ENCODE measurements at regions of chr1 and their contacts with region 1.

Region 1: GRCh38 chr1:67791686-67792475 is 41.4 kb downstream of the GNG12 start:
- DNase-seq: no peak
- ATAC-seq: no peak
- H3K4me3 ChIP-seq: no peak overlapping the region
- H3K27ac ChIP-seq: no peak overlapping the region
- H3K4me1 ChIP-seq: no peaks in the 10 kb centered on the region
- H3K27me3 ChIP-seq: no peaks in the 10 kb centered on the region; a peak in 2 of 4 replicates
- CTCF ChIP-seq: no peak
- EP300 ChIP-seq: no peak
- POLR2A ChIP-seq: no peak
- RAD21 ChIP-seq: no peak

Region 2: GRCh38 chr1:67489643-67490042 is 302.2 kb before region 1 on chr1:
- CTCF ChIA-PET with region 1: no interaction called
- POLR2A ChIA-PET with region 1: no interaction called
- RAD21 ChIA-PET with region 1: no interaction called
- SMC1A ChIA-PET with region 1: no interaction called
- in situ Hi-C with region 1: no loop called
- intact Hi-C with region 1: no loop called
- DNase-seq: peak; percentile 0
- ATAC-seq: peak; percentile 81
- H3K4me3 ChIP-seq: no peak overlapping the region
- H3K27ac ChIP-seq: no peak overlapping the region
- H3K4me1 ChIP-seq: no peaks in the 10 kb centered on the region
- H3K27me3 ChIP-seq: no peaks in the 10 kb centered on the region
- CTCF ChIP-seq: peak; percentile 36 to 51 (median 36); a peak in 4 of 6 replicates
- EP300 ChIP-seq: no peak
- POLR2A ChIP-seq: no peak
- RAD21 ChIP-seq: peak; percentile 58

Region 3: GRCh38 chr1:67803380-67804279 is 11.7 kb after region 1 on chr1:
- CTCF ChIA-PET with region 1: interaction called, 24 read pairs
- POLR2A ChIA-PET with region 1: interaction called, 16 read pairs
- RAD21 ChIA-PET with region 1: interaction called, 32 read pairs
- SMC1A ChIA-PET with region 1: interaction called, 389 read pairs
- in situ Hi-C with region 1: no loop called
- intact Hi-C with region 1: no loop called
- DNase-seq: no peak
- ATAC-seq: peak; percentile 19; the same call in 2 of the 3 replicates
- H3K4me3 ChIP-seq: no peak overlapping the region
- H3K27ac ChIP-seq: no peak overlapping the region
- H3K4me1 ChIP-seq: no peaks in the 10 kb centered on the region
- H3K27me3 ChIP-seq: no peaks in the 10 kb centered on the region; a peak in 1 of 4 replicates
- CTCF ChIP-seq: no peak
- EP300 ChIP-seq: no peak
- POLR2A ChIP-seq: no peak
- RAD21 ChIP-seq: no peak

Region 4: GRCh38 chr1:67832737-67833601 is 41.1 kb after region 1 on chr1 and contains the start of gene GNG12:
- CTCF ChIA-PET with region 1: interaction called, 6 read pairs
- POLR2A ChIA-PET with region 1: interaction called, 15 read pairs
- RAD21 ChIA-PET with region 1: interaction called, 25 read pairs
- SMC1A ChIA-PET with region 1: interaction called, 22 read pairs
- in situ Hi-C with region 1: no loop called
- intact Hi-C with region 1: no loop called
- DNase-seq: no peak
- ATAC-seq: peak; percentile 78
- H3K4me3 ChIP-seq: no peak within 1 kb of the TSS
- H3K27ac ChIP-seq: no peak within 1 kb of the TSS
- H3K4me1 ChIP-seq: no peaks in the 10 kb centered on the region
- H3K27me3 ChIP-seq: peaks cover 6 to 11% of the 10 kb centered on the region in 2 experiments; a peak in 3 of 4 replicates
- CTCF ChIP-seq: no peak
- EP300 ChIP-seq: no peak
- POLR2A ChIP-seq: no peak
- RAD21 ChIP-seq: no peak
- polyA plus RNA-seq, gene GNG12: 0.22 to 0.27 TPM

Region 5: DNA sequence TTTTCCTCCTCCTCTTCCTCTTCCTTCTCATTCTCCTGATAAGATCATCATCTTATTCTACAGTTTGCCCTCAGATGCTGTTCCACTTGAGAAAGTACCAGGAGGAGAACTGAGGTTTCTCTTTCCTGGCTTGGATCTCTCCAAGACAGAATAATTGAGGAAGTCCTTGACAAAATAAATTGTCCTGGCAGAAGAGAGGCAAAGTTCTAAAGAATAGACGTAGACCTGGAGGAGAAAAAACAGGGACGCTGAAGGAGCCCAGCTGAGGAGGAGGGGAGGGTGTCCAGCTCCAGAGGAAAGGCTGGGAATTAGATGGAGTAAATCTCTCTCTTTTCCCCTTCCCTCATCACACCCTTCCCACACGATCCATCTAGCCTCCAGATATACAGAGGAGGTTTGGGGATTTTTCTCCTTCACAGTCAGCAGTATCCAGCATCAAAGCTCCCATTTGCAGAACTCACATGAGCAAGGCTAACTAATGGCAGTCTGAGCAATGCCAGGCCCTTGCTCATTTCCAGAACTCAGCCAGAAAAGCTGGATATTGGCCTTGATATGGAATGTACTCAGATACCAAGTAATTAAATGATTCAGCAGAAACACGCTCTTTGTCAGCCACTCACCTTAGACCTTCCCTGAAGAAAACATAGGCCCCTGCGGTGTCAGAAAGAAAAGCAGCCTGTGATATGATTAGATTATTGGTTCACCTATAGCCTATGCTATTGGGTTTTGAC is 46.5 kb after region 1 on chr1:
- CTCF ChIA-PET with region 1: interaction called, 5 read pairs
- POLR2A ChIA-PET with region 1: interaction called, 15 read pairs
- RAD21 ChIA-PET with region 1: interaction called, 17 read pairs
- SMC1A ChIA-PET with region 1: interaction called, 22 read pairs
- in situ Hi-C with region 1: no loop called
- intact Hi-C with region 1: no loop called
- DNase-seq: no peak
- ATAC-seq: peak; percentile 16; the same call in 1 of the 3 replicates
- H3K4me3 ChIP-seq: no peak overlapping the region
- H3K27ac ChIP-seq: no peak overlapping the region
- H3K4me1 ChIP-seq: no peaks in the 10 kb centered on the region
- H3K27me3 ChIP-seq: peaks cover 0 to 3% of the 10 kb centered on the region in 2 experiments; a peak in 2 of 4 replicates
- CTCF ChIP-seq: no peak
- EP300 ChIP-seq: no peak
- POLR2A ChIP-seq: no peak
- RAD21 ChIP-seq: no peak